ENCODE measurements at regions of chr4 and their contacts with region 1.

Region 1: GRCh38 chr4:83110223-83110945 is 4.1 kb downstream of the PLAC8 start:
- DNase-seq: peak; percentile 82
- ATAC-seq: peak; percentile 76
- H3K4me3 Mint-ChIP-seq: peak overlapping the region; percentile 94
- H3K27ac Mint-ChIP-seq: peak overlapping the region; percentile 99
- H3K4me1 Mint-ChIP-seq: peaks cover 70% of the 10 kb centered on the region
- H3K27me3 Mint-ChIP-seq: no peaks in the 10 kb centered on the region
- CTCF ChIP-seq: no peak

Region 2: GRCh38 chr4:82758701-82759685 is 351.4 kb before region 1 on chr4:
- CTCF ChIA-PET with region 1: no interaction called
- POLR2A ChIA-PET with region 1: no interaction called
- intact Hi-C with region 1: no loop called
- DNase-seq: no peak
- ATAC-seq: no peak
- H3K4me3 Mint-ChIP-seq: no peak overlapping the region
- H3K27ac Mint-ChIP-seq: no peak overlapping the region
- H3K4me1 Mint-ChIP-seq: peaks cover 1% of the 10 kb centered on the region
- H3K27me3 Mint-ChIP-seq: no peaks in the 10 kb centered on the region
- CTCF ChIP-seq: no peak

Region 3: DNA sequence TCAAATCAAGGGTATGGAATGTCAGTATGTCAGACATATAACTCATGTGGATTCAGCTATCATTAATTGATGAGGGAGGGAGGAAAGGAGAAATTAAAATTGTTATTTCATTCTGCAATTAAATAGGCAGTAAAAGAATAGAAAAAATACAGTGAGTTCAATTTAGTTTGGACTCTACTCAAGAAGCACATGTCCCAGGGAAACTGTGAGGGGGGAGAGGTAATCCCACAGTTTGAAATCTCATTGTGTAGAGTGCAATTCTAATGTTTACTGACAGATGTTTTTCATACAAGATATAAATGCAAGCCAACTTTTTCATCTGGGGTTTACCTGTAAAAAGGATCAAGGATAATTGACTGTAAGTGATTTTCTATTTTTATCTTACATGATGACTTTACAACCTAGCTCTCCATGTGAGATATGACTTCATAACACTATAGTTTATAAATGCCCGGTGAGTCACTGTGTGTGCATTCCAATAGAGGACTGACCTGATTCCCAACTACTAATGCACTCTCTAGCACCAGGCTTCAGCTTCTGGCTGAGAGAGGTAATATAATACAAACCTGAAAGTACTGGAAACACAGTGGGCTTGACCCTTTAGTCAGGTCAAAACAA is 276.6 kb before region 1 on chr4:
- CTCF ChIA-PET with region 1: no interaction called
- POLR2A ChIA-PET with region 1: no interaction called
- intact Hi-C with region 1: no loop called
- DNase-seq: no peak
- ATAC-seq: no peak
- H3K4me3 Mint-ChIP-seq: no peak overlapping the region
- H3K27ac Mint-ChIP-seq: no peak overlapping the region
- H3K4me1 Mint-ChIP-seq: no peaks in the 10 kb centered on the region
- H3K27me3 Mint-ChIP-seq: no peaks in the 10 kb centered on the region
- CTCF ChIP-seq: no peak

Region 4: DNA sequence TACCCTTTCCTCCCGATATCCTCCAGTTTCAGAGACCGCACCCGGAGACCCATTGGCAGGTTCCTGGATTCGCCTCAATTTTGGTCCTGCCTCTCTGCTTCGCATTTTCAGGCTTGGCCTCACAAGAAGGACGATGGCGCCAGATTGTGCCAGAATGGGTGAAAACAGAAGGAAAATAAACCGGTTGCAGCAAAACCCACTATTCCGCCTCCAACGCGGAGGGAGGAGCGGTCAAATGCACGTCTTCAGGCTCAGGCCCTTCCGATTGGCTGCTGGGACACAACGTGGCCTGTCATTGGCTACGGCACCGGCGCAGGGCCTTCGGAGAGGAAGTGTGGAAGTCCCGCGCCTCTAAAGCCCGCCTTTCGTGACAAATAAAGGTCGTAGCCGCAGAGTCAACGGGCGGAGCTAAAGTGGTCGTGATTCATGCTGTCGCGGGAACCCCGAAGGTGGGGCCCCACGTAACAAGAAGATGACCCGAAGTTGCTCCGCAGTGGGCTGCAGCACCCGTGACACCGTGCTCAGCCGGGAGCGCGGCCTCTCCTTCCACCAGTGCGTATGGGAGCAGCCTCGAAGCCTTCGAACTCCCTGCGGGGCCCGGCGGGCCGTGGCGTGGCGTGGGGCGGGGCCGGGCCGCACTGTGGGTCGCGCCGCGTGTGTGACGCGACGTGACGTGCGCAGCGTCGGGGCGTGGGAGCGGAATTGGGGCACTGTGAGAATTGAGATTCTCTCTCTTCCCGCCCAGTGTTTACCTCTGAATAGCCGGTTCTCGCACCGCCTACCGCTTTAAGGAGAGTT is 209.9 kb before region 1 on chr4 and contains the start of gene THAP9:
- CTCF ChIA-PET with region 1: no interaction called
- POLR2A ChIA-PET with region 1: interaction called, 3 read pairs
- intact Hi-C with region 1: loop called (anchors 2 kb)
- DNase-seq: peak; percentile 92
- ATAC-seq: peak; percentile 90
- H3K4me3 Mint-ChIP-seq: no peak within 1 kb of the TSS
- H3K27ac Mint-ChIP-seq: no peak within 1 kb of the TSS
- H3K4me1 Mint-ChIP-seq: peaks cover 20% of the 10 kb centered on the region
- H3K27me3 Mint-ChIP-seq: no peaks in the 10 kb centered on the region
- CTCF ChIP-seq: no peak
- total RNA-seq, gene THAP9: 2.1 and 3.1 TPM in 2 replicates

Region 5: GRCh38 chr4:83054928-83055327 is 55.5 kb before region 1 on chr4:
- CTCF ChIA-PET with region 1: no interaction called
- POLR2A ChIA-PET with region 1: no interaction called
- intact Hi-C with region 1: no loop called
- DNase-seq: no peak
- ATAC-seq: no peak
- H3K4me3 Mint-ChIP-seq: no peak overlapping the region
- H3K27ac Mint-ChIP-seq: no peak overlapping the region
- H3K4me1 Mint-ChIP-seq: peaks cover 2% of the 10 kb centered on the region
- H3K27me3 Mint-ChIP-seq: no peaks in the 10 kb centered on the region
- CTCF ChIP-seq: no peak

Region 6: DNA sequence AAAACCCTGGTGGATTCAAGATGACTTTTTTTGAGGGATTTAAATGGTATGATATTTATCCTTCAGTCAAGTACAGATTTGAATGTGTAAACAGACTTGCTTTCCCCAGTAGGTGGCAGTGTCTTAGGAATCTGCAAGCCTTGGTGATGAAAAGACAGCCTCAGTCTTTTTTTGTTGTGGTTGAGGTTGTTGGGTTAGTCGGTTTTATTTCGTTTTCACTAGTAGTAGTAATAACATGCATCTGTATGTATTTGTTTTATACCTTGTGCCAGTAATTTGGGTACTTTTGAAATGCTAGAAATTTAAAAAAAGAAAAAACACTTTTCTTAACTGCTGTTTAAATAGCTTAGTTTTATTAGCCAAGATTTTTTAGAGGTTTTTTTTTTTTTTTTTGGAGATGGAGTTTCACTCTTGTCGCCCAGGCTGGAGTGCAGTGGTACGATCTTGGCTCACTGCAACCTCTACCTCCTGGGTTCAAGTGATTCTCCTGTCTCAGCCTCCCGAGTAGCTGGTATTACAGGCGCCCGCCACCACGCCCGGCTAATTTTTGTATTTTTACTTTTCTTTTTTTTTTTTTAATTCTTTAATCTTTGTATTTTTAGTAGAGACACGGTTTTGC is 36.2 kb before region 1 on chr4:
- CTCF ChIA-PET with region 1: interaction called, 8 read pairs
- POLR2A ChIA-PET with region 1: interaction called, 26 read pairs
- intact Hi-C with region 1: loop called (anchors 1 kb)
- DNase-seq: no peak
- ATAC-seq: peak; percentile 81
- H3K4me3 Mint-ChIP-seq: peak overlapping the region; percentile 53
- H3K27ac Mint-ChIP-seq: peak overlapping the region; percentile 76
- H3K4me1 Mint-ChIP-seq: peaks cover 26% of the 10 kb centered on the region
- H3K27me3 Mint-ChIP-seq: no peaks in the 10 kb centered on the region
- CTCF ChIP-seq: peak; percentile 52

Region 7: DNA sequence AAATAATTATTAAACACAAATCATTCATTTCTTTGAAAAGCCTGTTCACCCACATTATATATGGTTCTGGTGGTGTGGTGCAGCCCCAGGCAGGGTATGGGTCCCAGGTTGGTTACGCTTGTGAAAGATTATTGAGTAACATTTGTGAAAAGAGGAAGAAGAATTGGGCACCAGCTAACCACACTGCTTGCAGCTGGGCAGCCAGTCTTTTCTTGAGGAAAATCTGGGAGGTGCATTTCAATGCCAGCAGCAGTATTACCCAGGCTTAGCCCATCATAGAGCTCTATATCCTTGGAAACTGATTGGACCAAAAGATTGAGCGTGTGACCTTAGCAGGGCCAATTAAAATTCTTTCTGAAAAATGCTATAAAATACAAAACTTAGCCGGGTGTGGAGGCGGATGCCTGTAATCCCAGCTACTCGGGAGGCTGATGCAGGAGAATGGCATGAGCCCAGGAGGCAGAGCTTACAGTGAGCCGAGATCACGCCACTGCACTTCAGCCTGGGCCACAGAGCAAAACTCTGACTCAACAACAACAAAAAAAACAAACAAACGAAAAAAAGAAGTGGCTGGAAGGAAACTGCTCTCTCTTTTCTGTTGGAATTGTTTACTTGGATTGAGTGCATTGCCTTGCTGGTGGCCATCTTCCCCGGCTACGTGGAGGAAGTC is 13.9 kb after region 1 on chr4:
- CTCF ChIA-PET with region 1: interaction called, 7 read pairs
- POLR2A ChIA-PET with region 1: interaction called, 63 read pairs
- intact Hi-C with region 1: loop called (anchors 1 kb)
- DNase-seq: no peak
- ATAC-seq: peak; percentile 93
- H3K4me3 Mint-ChIP-seq: peak overlapping the region; percentile 56
- H3K27ac Mint-ChIP-seq: peak overlapping the region; percentile 81
- H3K4me1 Mint-ChIP-seq: peaks cover 47% of the 10 kb centered on the region
- H3K27me3 Mint-ChIP-seq: no peaks in the 10 kb centered on the region
- CTCF ChIP-seq: no peak

Region 8: GRCh38 chr4:83150653-83151330 is 40.4 kb after region 1 on chr4:
- CTCF ChIA-PET with region 1: interaction called, 15 read pairs
- POLR2A ChIA-PET with region 1: interaction called, 21 read pairs
- intact Hi-C with region 1: loop called (anchors 1 kb)
- DNase-seq: no peak
- ATAC-seq: no peak
- H3K4me3 Mint-ChIP-seq: no peak overlapping the region
- H3K27ac Mint-ChIP-seq: no peak overlapping the region
- H3K4me1 Mint-ChIP-seq: peaks cover 45% of the 10 kb centered on the region
- H3K27me3 Mint-ChIP-seq: no peaks in the 10 kb centered on the region
- CTCF ChIP-seq: no peak

Region 9: GRCh38 chr4:83217721-83218522 is 107.5 kb after region 1 on chr4:
- CTCF ChIA-PET with region 1: interaction called, 10 read pairs
- POLR2A ChIA-PET with region 1: interaction called, 81 read pairs
- intact Hi-C with region 1: loop called (anchors 1 kb)
- DNase-seq: peak; percentile 40
- ATAC-seq: peak; percentile 90
- H3K4me3 Mint-ChIP-seq: peak overlapping the region; percentile 76
- H3K27ac Mint-ChIP-seq: peak overlapping the region; percentile 91
- H3K4me1 Mint-ChIP-seq: peaks cover 91% of the 10 kb centered on the region
- H3K27me3 Mint-ChIP-seq: no peaks in the 10 kb centered on the region
- CTCF ChIP-seq: no peak

Measured in activated B cell treated with CpG ODN at 0.5 μM for 24 hours (primary cell).